Activated T-helper 1 cell treated with anti-CD3 and anti-CD28 coated beads, Interleukin-12 subunit alpha, Interleukin-12 subunit beta, Interleukin-2, Interleukin-4 antibody, amounts not matched to agents 30 ng/mL and 10 ng/mL and 1 ng/mL, durations not matched to agents 14 hours and 24 hours and 36 hours (primary cell): ENCODE measurements at regions of chr18 and their contacts with region 1.

Region 1: DNA sequence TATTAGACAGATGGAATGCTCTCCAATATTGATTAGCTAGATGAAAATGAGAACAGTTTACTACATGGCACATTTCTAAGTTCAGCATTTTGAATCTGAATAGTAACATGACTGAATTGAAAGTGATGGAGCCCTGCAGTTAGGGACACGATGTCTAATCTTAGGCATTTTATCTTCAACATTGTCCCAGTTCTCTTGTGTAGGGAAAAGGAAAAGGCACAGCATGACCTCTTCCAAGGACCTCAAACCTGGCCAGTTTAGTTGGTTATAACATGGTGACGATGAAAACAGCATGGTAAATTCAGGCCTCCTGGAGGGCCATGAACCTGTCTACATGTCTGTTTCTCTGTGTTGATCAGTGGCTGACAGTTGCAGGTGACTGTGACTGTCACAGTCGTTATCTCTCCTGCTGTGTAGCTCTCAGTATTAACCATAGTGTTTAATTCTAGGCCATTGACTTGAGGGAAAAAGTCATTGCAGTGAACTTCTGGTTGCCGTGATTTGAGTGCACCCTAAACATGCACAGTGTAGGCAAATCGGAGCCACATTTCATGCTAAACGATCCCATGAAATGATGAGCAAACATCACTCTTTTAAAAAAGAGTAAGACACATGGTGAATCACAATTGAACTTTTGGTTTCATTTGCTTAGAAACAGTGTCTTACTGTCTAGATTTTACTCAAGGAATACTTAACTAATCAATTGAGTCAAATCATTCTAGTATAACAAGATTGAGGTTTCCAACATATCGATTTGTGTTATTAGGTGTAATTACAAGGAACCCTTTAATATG is 129.7 kb downstream of the PHLPP1 start:
- DNase-seq: no peak
- H3K4me3 Mint-ChIP-seq: peak overlapping the region; percentile 70
- H3K27ac Mint-ChIP-seq: peak overlapping the region; percentile 82
- H3K4me1 Mint-ChIP-seq: peaks cover 51% of the 10 kb centered on the region
- H3K27me3 Mint-ChIP-seq: no peaks in the 10 kb centered on the region

Region 2: DNA sequence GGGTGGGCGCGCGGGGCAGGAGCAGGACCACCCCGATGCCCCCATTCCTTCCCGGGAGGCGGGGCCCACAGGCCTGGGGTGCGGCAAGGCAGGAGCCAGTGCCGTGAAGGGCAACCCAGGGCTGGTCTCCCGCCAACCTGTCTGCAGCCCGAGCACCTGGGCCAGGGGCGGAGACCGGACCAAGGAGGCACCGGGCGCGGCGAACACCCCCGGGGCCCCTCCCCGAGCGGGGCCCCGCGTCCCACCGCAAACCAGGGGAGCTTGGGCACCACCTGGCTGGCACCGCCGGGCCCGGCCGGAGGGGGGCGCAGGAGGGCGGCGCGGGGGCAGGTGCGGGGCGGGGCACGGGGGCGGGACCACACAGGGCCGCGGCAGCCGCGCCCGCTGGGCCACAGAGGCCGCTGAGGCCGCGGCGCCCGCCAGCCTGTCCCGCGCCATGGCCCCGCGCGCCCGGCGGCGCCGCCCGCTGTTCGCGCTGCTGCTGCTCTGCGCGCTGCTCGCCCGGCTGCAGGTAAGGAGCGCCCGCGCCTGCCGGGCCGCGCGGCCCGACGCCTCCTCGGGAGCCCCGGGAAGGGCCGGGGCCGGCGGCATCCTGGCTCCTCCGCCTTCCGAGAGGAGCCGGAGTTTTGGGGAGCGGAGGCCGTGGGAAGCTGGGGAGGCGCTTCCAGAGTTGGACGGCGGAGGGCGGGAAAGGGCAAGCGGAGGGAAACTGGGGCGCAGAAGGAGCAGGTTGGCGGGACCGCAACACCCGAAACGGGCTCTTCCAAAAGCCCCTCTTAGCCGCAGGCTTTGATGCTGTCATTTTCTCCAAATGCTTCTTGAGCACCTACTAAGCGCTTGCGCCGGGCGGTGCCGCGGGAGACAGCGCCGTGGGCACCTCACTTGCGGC is 519.9 kb before region 1 on chr18 and contains the start of gene TNFRSF11A:
- intact Hi-C with region 1: loop called (anchors 5 kb)
- DNase-seq: peak; percentile 62
- H3K4me3 Mint-ChIP-seq: peak within 1 kb of the TSS; percentile 97
- H3K27ac Mint-ChIP-seq: peak within 1 kb of the TSS; percentile 87
- H3K4me1 Mint-ChIP-seq: peaks cover 62% of the 10 kb centered on the region
- H3K27me3 Mint-ChIP-seq: peaks cover 34% of the 10 kb centered on the region
- total RNA-seq, gene TNFRSF11A: 22.9 and 27.1 TPM in 2 replicates

Region 3: DNA sequence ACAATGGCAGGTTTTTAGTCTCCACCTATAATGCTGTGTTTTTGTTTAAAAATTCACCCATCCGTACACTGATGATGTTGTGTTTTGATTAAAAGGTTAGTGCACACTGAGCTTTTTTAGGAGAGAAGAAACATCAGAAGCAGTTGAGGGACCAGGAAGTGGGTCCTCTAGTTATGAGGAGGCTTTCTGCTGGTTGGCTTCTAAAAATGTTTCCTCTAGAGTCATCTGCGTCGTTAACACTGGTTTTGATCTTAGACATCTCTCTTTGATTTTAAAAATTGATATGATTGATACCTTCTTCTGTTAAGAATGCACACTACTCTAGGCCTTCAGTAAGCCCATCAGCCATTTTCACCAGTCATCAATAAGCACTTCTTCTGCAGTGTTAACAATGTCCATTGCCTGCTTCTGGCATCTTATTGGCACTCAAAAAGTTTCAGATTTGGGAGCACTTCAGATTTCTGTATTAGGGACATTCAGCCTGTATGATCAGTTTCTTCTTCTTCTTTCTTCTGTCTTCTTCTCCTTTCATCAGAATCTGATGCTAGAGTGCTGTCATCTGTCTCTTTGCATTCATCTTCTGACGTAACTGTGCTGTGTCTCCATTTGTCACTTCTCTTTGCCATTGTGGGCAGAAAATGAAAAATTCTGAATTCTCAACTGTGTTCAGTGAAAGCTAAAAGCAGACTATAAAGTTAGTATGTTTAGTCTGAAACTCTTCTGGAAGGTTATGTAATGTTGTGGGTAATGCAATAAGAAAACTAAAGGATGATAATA is 73.4 kb before region 1 on chr18:
- intact Hi-C with region 1: loop called (anchors 2 kb)
- DNase-seq: no peak
- H3K4me3 Mint-ChIP-seq: no peak overlapping the region
- H3K27ac Mint-ChIP-seq: peak overlapping the region; percentile 20
- H3K4me1 Mint-ChIP-seq: peaks cover 29% of the 10 kb centered on the region
- H3K27me3 Mint-ChIP-seq: no peaks in the 10 kb centered on the region

Region 4: GRCh38 chr18:62938487-62938886 is 93.4 kb after region 1 on chr18:
- intact Hi-C with region 1: loop called (anchors 5 kb)
- DNase-seq: no peak
- H3K4me3 Mint-ChIP-seq: no peak overlapping the region
- H3K27ac Mint-ChIP-seq: no peak overlapping the region
- H3K4me1 Mint-ChIP-seq: peaks cover 24% of the 10 kb centered on the region
- H3K27me3 Mint-ChIP-seq: no peaks in the 10 kb centered on the region

Region 5: GRCh38 chr18:63299837-63300745 is 455.0 kb after region 1 on chr18:
- intact Hi-C with region 1: loop called (anchors 10 kb)
- DNase-seq: no peak
- H3K4me3 Mint-ChIP-seq: peak overlapping the region; percentile 76
- H3K27ac Mint-ChIP-seq: peak overlapping the region; percentile 96
- H3K4me1 Mint-ChIP-seq: peaks cover 91% of the 10 kb centered on the region
- H3K27me3 Mint-ChIP-seq: no peaks in the 10 kb centered on the region